ENCODE measurements at regions of chr20 and their contacts with region 1.

Region 1: GRCh38 chr20:12775041-12775440 is 233.7 kb upstream of the SPTLC3 start:
- DNase-seq: no peak
- H3K4me3 ChIP-seq: no peak overlapping the region
- H3K27ac ChIP-seq: no peak overlapping the region
- H3K4me1 ChIP-seq: no peaks in the 10 kb centered on the region
- H3K27me3 ChIP-seq: no peaks in the 10 kb centered on the region
- CTCF ChIP-seq: no peak
- EP300 ChIP-seq: no peak
- POLR2A ChIP-seq: no peak

Region 2: GRCh38 chr20:11608736-11609135 is 1166.3 kb before region 1 on chr20:
- in situ Hi-C with region 1: loop called in 1 of 4 experiments (anchors 25 kb)
- intact Hi-C with region 1: no loop called
- DNase-seq: no peak
- H3K4me3 ChIP-seq: no peak overlapping the region
- H3K27ac ChIP-seq: no peak overlapping the region
- H3K4me1 ChIP-seq: no peaks in the 10 kb centered on the region
- H3K27me3 ChIP-seq: no peaks in the 10 kb centered on the region
- CTCF ChIP-seq: no peak
- EP300 ChIP-seq: no peak
- POLR2A ChIP-seq: no peak

Region 3: GRCh38 chr20:12882832-12883506 is 107.9 kb after region 1 on chr20:
- in situ Hi-C with region 1: loop called in 1 of 4 experiments (anchors 25 kb)
- intact Hi-C with region 1: no loop called
- DNase-seq: no peak
- H3K4me3 ChIP-seq: no peak overlapping the region
- H3K27ac ChIP-seq: no peak overlapping the region
- H3K4me1 ChIP-seq: no peaks in the 10 kb centered on the region
- H3K27me3 ChIP-seq: no peaks in the 10 kb centered on the region
- CTCF ChIP-seq: no peak
- EP300 ChIP-seq: no peak
- POLR2A ChIP-seq: no peak

Region 4: GRCh38 chr20:13373400-13373799 is 598.4 kb after region 1 on chr20:
- in situ Hi-C with region 1: no loop called
- intact Hi-C with region 1: no loop called
- DNase-seq: no peak
- H3K4me3 ChIP-seq: no peak overlapping the region
- H3K27ac ChIP-seq: no peak overlapping the region
- H3K4me1 ChIP-seq: no peaks in the 10 kb centered on the region
- H3K27me3 ChIP-seq: no peaks in the 10 kb centered on the region
- CTCF ChIP-seq: no peak
- EP300 ChIP-seq: no peak
- POLR2A ChIP-seq: no peak

Measured in transverse colon (tissue), 4 donors.